ENCODE measurements at regions of chr2 and their contacts with region 1.

Region 1: DNA sequence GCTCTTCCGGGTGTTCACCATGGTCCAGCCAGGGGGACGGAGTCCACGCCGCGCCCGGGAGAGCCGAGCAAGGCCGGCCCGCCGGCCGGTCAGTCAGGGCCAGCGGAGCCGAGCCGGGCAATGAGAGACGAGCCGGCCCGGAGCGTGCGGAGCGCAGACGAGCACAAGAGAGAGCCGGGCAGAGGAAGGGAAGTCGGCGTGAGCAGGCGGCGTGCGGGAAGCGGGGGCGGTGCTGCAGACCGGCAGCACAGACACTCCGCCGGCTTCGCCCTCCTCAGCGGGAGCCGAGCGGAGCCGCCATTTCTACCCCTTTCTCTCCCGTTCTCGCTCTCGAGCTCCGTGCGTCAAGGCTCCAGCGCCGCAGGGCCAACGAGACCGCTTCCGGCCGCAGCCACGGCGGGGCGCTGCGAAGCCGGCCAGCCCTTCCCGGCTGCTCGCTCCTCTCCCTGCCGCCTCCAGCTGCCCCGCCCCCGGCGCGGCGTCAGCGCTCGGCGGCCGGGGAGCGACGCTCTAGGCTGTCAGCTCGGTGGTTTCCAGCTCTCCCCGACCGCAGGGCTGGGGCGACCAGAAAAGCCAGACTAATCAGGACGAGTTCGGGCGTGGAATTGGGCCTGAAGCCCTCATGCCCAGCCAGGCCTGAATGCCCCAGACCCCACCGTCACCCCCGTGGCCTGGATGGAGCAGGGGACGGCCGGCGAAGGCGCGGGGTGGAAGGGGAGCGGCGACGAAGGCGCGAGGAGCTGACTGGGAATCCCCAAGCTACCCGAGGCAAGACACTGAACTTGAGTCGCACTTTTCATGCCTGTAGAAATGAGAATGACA is at the start of gene ATAD2B:
- DNase-seq: peak; percentile 96
- H3K4me3 ChIP-seq: peak within 1 kb of the TSS; percentile 73 to 79 (median 78)
- H3K27ac ChIP-seq: peak within 1 kb of the TSS; percentile 82
- H3K4me1 ChIP-seq: peaks cover 23% of the 10 kb centered on the region
- H3K27me3 ChIP-seq: no peaks in the 10 kb centered on the region
- CTCF ChIP-seq: peak; percentile 85 to 89
- POLR2A ChIP-seq: peak; percentile 82
- total RNA-seq, gene ATAD2B: 19.1 and 20.0 TPM in 2 replicates

Region 2: DNA sequence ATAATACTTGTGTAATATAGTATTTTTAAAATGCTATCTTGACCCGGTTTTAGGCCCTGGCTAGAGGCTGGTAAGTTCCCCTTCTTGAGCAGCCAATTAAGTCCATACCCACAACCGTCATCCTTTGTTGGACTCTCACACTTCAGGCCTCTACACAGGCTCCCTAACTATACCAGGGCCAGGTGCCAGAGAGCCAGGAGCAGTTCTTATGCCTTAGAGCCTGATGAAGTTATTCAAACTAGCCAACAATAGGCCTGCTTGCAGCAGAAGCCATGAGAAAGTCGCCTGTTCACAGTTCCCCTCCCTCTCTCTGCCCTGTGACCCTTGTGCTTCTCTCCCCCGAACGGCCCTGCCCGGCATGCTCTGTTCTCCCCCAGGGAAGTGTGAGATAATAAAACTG is 996.2 kb before region 1 on chr2:
- CTCF ChIA-PET with region 1: no interaction called
- POLR2A ChIA-PET with region 1: no interaction called
- dilution Hi-C with region 1: no loop called
- intact Hi-C with region 1: no loop called
- DNase-seq: no peak
- H3K4me3 ChIP-seq: no peak overlapping the region
- H3K27ac ChIP-seq: no peak overlapping the region
- H3K4me1 ChIP-seq: no peaks in the 10 kb centered on the region
- H3K27me3 ChIP-seq: no peaks in the 10 kb centered on the region
- CTCF ChIP-seq: no peak
- POLR2A ChIP-seq: no peak

Region 3: GRCh38 chr2:23497063-23497462 is 429.9 kb before region 1 on chr2:
- CTCF ChIA-PET with region 1: no interaction called
- POLR2A ChIA-PET with region 1: no interaction called
- dilution Hi-C with region 1: no loop called
- intact Hi-C with region 1: no loop called
- DNase-seq: peak; percentile 75
- H3K4me3 ChIP-seq: no peak overlapping the region
- H3K27ac ChIP-seq: no peak overlapping the region
- H3K4me1 ChIP-seq: peaks cover 14% of the 10 kb centered on the region
- H3K27me3 ChIP-seq: no peaks in the 10 kb centered on the region
- CTCF ChIP-seq: no peak
- POLR2A ChIP-seq: no peak

Region 4: GRCh38 chr2:23939987-23940717 is 13.2 kb after region 1 on chr2 and contains the start of gene UBXN2A:
- CTCF ChIA-PET with region 1: interaction called, 31 read pairs
- POLR2A ChIA-PET with region 1: interaction called, 8 read pairs
- dilution Hi-C with region 1: no loop called
- intact Hi-C with region 1: loop called (anchors 1 kb)
- DNase-seq: peak; percentile 80
- H3K4me3 ChIP-seq: peak within 1 kb of the TSS; percentile 50 to 92 (median 82)
- H3K27ac ChIP-seq: peak within 1 kb of the TSS; percentile 78
- H3K4me1 ChIP-seq: peaks cover 15% of the 10 kb centered on the region
- H3K27me3 ChIP-seq: no peaks in the 10 kb centered on the region
- CTCF ChIP-seq: no peak
- POLR2A ChIP-seq: peak; percentile 77
- total RNA-seq, gene UBXN2A: 16.8 and 19.0 TPM in 2 replicates

Region 5: GRCh38 chr2:24015562-24016346 is 88.8 kb after region 1 on chr2:
- CTCF ChIA-PET with region 1: interaction called, 6 read pairs
- POLR2A ChIA-PET with region 1: no interaction called
- dilution Hi-C with region 1: no loop called
- intact Hi-C with region 1: loop called (anchors 2 kb)
- DNase-seq: peak; percentile 81
- H3K4me3 ChIP-seq: no peak overlapping the region
- H3K27ac ChIP-seq: peak overlapping the region; percentile 94
- H3K4me1 ChIP-seq: peaks cover 24% of the 10 kb centered on the region
- H3K27me3 ChIP-seq: no peaks in the 10 kb centered on the region
- CTCF ChIP-seq: no peak
- POLR2A ChIP-seq: peak; percentile 16

Region 6: GRCh38 chr2:24046930-24047702 is 120.2 kb after region 1 on chr2 and contains the start of gene WDCP:
- CTCF ChIA-PET with region 1: interaction called, 13 read pairs
- POLR2A ChIA-PET with region 1: interaction called, 15 read pairs
- dilution Hi-C with region 1: no loop called
- intact Hi-C with region 1: loop called (anchors 1 kb)
- DNase-seq: peak; percentile 99
- H3K4me3 ChIP-seq: peak within 1 kb of the TSS; percentile 89 to 95 (median 89)
- H3K27ac ChIP-seq: peak within 1 kb of the TSS; percentile 36
- H3K4me1 ChIP-seq: peaks cover 23% of the 10 kb centered on the region
- H3K27me3 ChIP-seq: no peaks in the 10 kb centered on the region
- CTCF ChIP-seq: no peak
- POLR2A ChIP-seq: peak; percentile 97
- total RNA-seq, gene WDCP: 15.4 and 15.9 TPM in 2 replicates

Region 7: DNA sequence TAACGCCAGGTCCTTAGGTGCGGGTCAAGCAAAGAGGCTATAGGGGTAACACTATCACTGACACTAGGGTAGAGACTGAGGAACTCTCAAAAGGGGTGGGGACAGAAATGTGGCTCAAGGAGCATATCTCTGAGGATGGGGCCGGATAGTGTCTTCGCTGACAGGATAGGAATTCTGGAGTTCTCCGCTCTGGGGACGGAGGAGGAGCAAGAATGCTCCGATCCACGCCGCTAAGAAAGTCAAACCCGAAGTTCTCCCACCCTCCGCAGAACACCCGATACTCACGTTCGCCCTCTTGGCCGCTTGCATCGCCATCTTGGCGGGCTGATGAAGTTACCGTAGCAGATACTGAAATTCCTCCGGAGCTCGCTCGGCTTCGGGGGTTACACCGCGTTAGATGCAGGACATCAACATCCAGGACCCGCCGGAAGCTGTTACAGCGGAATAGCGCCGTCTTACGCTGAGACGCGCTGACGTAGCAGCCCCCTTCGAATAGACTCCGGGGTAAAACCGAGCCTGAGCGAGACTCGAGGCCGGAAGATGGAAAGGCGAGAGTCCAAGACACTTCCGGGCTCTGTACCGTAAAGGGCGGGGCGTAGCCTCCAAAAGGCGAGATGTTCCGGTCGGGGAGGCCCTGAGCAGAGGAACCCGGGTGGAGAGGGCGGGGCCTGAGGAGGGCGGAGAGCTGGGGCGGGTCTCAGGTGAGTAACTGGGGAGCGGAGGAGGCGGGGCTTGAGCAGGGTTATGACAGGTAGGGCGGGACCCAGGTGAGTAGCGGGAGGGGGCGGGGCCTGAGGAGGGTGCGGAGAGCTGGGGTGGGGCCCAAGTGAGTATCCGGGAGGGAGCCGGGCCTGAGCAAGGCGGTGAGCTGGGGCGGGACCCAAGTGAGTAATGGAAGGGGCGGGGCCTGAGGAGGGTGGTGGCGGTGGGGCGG is 149.2 kb after region 1 on chr2 and contains the start of gene SF3B6:
- CTCF ChIA-PET with region 1: interaction called, 9 read pairs
- POLR2A ChIA-PET with region 1: interaction called, 3 read pairs
- dilution Hi-C with region 1: no loop called
- intact Hi-C with region 1: loop called (anchors 1 kb)
- DNase-seq: peak; percentile 98
- H3K4me3 ChIP-seq: peak within 1 kb of the TSS; percentile 79 to 92 (median 87)
- H3K27ac ChIP-seq: peak within 1 kb of the TSS; percentile 18
- H3K4me1 ChIP-seq: peaks cover 12% of the 10 kb centered on the region
- H3K27me3 ChIP-seq: no peaks in the 10 kb centered on the region
- CTCF ChIP-seq: no peak
- POLR2A ChIP-seq: peak; percentile 79
- total RNA-seq, gene SF3B6: 105 and 108 TPM in 2 replicates

Region 8: GRCh38 chr2:24164125-24164973 is 237.4 kb after region 1 on chr2:
- CTCF ChIA-PET with region 1: interaction called, 7 read pairs
- POLR2A ChIA-PET with region 1: interaction called, 3 read pairs
- dilution Hi-C with region 1: no loop called
- intact Hi-C with region 1: loop called (anchors 2 kb)
- DNase-seq: no peak
- H3K4me3 ChIP-seq: no peak overlapping the region
- H3K27ac ChIP-seq: no peak overlapping the region
- H3K4me1 ChIP-seq: no peaks in the 10 kb centered on the region
- H3K27me3 ChIP-seq: no peaks in the 10 kb centered on the region
- CTCF ChIP-seq: peak; percentile 64 to 76
- POLR2A ChIP-seq: no peak

Measured in endothelial cell of umbilical vein (primary cell).